GM12878 (cell line): ENCODE measurements at regions of chr14 and their contacts with region 1.

Region 1: GRCh38 chr14:102786768-102787167 is 9.5 kb downstream of the TRAF3 start:
- DNase-seq: no peak
- ATAC-seq: peak; percentile 67
- H3K4me3 ChIP-seq: peak overlapping the region; percentile 74; the same call in 1 of the 2 replicates
- H3K27ac ChIP-seq: peak overlapping the region; percentile 81
- H3K4me1 ChIP-seq: peaks cover 27% of the 10 kb centered on the region
- H3K27me3 ChIP-seq: no peaks in the 10 kb centered on the region
- CTCF ChIP-seq: no peak
- EP300 ChIP-seq: no peak
- POLR2A ChIP-seq: peak; percentile 40; the same call in 1 of the 2 replicates
- RAD21 ChIP-seq: no peak

Region 2: GRCh38 chr14:102171177-102172020 is 615.4 kb before region 1 on chr14:
- CTCF ChIA-PET with region 1: no interaction called
- POLR2A ChIA-PET with region 1: no interaction called
- RAD21 ChIA-PET with region 1: no interaction called
- SMC1A ChIA-PET with region 1: no interaction called
- in situ Hi-C with region 1: no loop called
- intact Hi-C with region 1: no loop called
- DNase-seq: no peak
- ATAC-seq: peak; percentile 42; the same call in 1 of the 3 replicates
- H3K4me3 ChIP-seq: no peak overlapping the region
- H3K27ac ChIP-seq: no peak overlapping the region
- H3K4me1 ChIP-seq: no peaks in the 10 kb centered on the region
- H3K27me3 ChIP-seq: no peaks in the 10 kb centered on the region
- CTCF ChIP-seq: no peak
- EP300 ChIP-seq: no peak
- POLR2A ChIP-seq: no peak
- RAD21 ChIP-seq: no peak

Region 3: GRCh38 chr14:102805371-102806246 is 18.8 kb after region 1 on chr14:
- CTCF ChIA-PET with region 1: interaction called, 32 read pairs
- POLR2A ChIA-PET with region 1: interaction called, 9 read pairs
- RAD21 ChIA-PET with region 1: interaction called, 14 read pairs
- SMC1A ChIA-PET with region 1: interaction called, 69 read pairs
- in situ Hi-C with region 1: no loop called
- intact Hi-C with region 1: no loop called
- DNase-seq: no peak
- ATAC-seq: peak; percentile 73
- H3K4me3 ChIP-seq: peak overlapping the region; percentile 43; the same call in 1 of the 2 replicates
- H3K27ac ChIP-seq: peak overlapping the region; percentile 78
- H3K4me1 ChIP-seq: peaks cover 77% of the 10 kb centered on the region
- H3K27me3 ChIP-seq: no peaks in the 10 kb centered on the region
- CTCF ChIP-seq: 0 out of 6 replicates have a peak, but pooled peaks of 2 of the 3 experiments have one; percentile 0 to 7
- EP300 ChIP-seq: no peak
- POLR2A ChIP-seq: peak; percentile 25; the same call in 1 of the 2 replicates
- RAD21 ChIP-seq: no peak

Region 4: DNA sequence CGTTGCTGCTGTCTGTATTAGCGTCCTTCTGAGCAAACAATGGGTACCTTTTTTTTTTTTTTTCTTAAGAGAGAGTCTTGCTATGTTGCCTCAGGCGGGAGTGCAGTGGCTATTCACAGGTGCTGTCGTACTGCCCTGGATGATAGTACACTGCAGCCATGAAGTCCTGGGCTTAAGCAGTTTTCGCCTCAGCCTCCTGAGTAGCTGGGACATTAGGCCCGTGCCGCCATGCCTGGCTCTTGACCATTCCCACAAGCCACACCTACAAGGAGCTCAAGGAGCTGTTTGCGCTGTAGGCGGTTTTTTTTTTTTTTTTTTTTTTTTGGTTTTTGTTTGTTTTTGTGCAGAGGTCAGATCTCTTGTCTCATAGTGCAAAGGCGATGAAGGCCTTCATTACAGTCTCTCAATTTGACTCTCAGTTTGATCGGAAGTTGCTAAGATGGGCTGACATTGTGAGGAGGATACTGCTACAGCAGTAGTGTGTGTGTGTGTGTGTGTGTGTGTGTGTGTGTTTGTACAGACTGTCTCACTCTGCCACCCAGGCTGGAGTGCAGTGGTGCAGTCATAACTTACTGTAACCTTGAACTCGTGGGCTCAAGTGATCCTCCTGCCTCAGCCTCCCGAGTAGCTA is 24.6 kb after region 1 on chr14:
- CTCF ChIA-PET with region 1: interaction called, 83 read pairs
- POLR2A ChIA-PET with region 1: interaction called, 9 read pairs
- RAD21 ChIA-PET with region 1: interaction called, 14 read pairs
- SMC1A ChIA-PET with region 1: interaction called, 99 read pairs
- in situ Hi-C with region 1: no loop called
- intact Hi-C with region 1: no loop called
- DNase-seq: no peak
- ATAC-seq: peak; percentile 4; the same call in 2 of the 3 replicates
- H3K4me3 ChIP-seq: no peak overlapping the region
- H3K27ac ChIP-seq: peak overlapping the region; percentile 48
- H3K4me1 ChIP-seq: peaks cover 74% of the 10 kb centered on the region
- H3K27me3 ChIP-seq: no peaks in the 10 kb centered on the region
- CTCF ChIP-seq: no peak
- EP300 ChIP-seq: no peak
- POLR2A ChIP-seq: no peak
- RAD21 ChIP-seq: no peak

Region 5: GRCh38 chr14:102819176-102819628 is 32.4 kb after region 1 on chr14:
- CTCF ChIA-PET with region 1: interaction called, 83 read pairs
- POLR2A ChIA-PET with region 1: interaction called, 23 read pairs
- RAD21 ChIA-PET with region 1: interaction called, 86 read pairs
- SMC1A ChIA-PET with region 1: interaction called, 99 read pairs
- in situ Hi-C with region 1: no loop called
- intact Hi-C with region 1: loop called (anchors 2 kb)
- DNase-seq: peak; percentile 89
- ATAC-seq: peak; percentile 90
- H3K4me3 ChIP-seq: peak overlapping the region; percentile 58
- H3K27ac ChIP-seq: peak overlapping the region; percentile 93
- H3K4me1 ChIP-seq: peaks cover 62% of the 10 kb centered on the region
- H3K27me3 ChIP-seq: no peaks in the 10 kb centered on the region
- CTCF ChIP-seq: no peak
- EP300 ChIP-seq: peak; percentile 92 to 94
- POLR2A ChIP-seq: peak; percentile 77
- RAD21 ChIP-seq: no peak

Region 6: DNA sequence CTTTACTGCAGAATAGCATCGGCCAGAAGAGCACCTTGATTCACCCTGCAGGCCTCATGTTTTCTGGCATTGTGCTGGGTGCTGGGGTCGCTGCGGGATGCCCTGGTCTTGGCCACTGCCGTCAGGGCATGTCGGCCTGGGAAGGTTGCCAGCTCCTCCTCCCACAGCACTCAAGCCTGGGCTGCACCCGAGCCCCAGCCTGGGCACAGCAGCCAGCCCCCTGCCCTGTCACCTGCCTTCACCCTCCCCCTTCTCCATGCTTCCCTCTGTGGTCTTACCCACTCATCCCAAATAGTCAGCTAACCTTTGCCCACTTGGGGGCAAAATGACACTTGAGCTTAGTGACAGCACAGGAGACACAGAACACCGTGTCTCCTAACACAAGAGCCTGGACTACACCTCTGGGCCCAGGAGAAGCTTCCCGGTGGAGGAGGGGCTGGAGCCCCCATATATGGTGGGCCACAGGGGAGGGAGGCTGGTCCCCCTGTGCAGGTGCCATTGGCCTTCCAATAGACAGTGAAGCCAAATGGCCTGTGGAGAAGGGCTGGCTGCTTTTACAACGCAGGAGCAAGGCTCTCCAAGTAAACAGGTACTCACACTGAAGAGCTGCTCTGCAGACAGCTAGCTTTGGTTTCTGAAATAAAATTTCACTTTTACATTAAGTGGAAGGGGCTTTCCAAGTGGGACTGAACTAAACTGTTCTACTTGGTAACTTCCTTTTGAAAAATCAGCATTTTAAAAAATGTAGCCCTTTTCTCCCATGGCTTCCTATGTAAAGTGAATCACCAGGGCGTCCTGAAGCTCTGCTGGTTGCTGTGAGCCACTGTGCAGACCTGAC is 84.4 kb after region 1 on chr14:
- CTCF ChIA-PET with region 1: interaction called, 3 read pairs
- POLR2A ChIA-PET with region 1: no interaction called
- RAD21 ChIA-PET with region 1: interaction called, 5 read pairs
- SMC1A ChIA-PET with region 1: interaction called, 12 read pairs
- in situ Hi-C with region 1: no loop called
- intact Hi-C with region 1: no loop called
- DNase-seq: no peak
- ATAC-seq: peak; percentile 59
- H3K4me3 ChIP-seq: no peak overlapping the region
- H3K27ac ChIP-seq: no peak overlapping the region; the same call in 1 of the 2 replicates
- H3K4me1 ChIP-seq: peaks cover 29% of the 10 kb centered on the region
- H3K27me3 ChIP-seq: no peaks in the 10 kb centered on the region
- CTCF ChIP-seq: no peak
- EP300 ChIP-seq: no peak
- POLR2A ChIP-seq: no peak
- RAD21 ChIP-seq: no peak

Region 7: GRCh38 chr14:102900631-102901571 is 114.1 kb after region 1 on chr14:
- CTCF ChIA-PET with region 1: interaction called, 17 read pairs
- POLR2A ChIA-PET with region 1: interaction called, 14 read pairs
- RAD21 ChIA-PET with region 1: interaction called, 25 read pairs
- SMC1A ChIA-PET with region 1: interaction called, 15 read pairs
- in situ Hi-C with region 1: no loop called
- intact Hi-C with region 1: no loop called
- DNase-seq: no peak
- ATAC-seq: peak; percentile 76
- H3K4me3 ChIP-seq: peak overlapping the region; percentile 43
- H3K27ac ChIP-seq: peak overlapping the region; percentile 98
- H3K4me1 ChIP-seq: peaks cover 59% of the 10 kb centered on the region
- H3K27me3 ChIP-seq: no peaks in the 10 kb centered on the region
- CTCF ChIP-seq: no peak
- EP300 ChIP-seq: no peak; a peak in 2 of 4 replicates
- POLR2A ChIP-seq: peak; percentile 61
- RAD21 ChIP-seq: no peak

Region 8: DNA sequence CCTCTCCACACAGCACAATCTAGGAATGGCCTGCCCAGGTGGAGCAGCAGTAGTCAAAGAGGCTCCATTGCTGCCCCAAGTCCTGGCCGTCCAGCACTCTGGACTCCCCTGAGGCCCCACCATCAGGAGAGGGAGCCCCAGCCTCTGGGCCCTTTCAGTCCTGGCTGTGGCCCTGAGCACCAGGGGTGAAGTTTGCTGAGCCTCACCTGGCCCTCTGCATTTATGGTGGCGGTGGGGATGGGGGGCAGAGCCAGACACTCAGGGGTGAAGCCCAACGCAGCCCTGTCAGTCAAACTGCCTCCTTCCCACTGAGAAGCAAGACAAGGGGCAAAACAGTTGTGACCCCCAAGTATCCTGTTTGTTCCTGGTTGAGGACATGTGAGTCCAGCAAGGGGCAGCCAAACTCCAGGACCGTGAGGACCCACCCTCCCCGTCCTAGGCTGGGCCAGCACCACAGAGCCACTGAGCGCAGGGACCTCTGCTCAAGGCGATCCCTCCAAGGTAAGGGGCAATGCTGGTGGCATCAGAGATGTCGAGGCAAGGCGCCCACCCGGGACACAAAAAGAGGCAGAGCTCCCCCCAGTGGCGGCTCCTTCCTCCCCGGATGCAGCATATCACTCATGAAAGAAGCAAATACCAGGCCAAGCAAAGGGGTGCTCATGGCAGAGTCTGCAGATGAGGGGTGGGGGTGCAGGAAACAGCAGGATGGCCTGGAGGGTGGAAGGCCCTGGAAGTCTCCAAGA is 130.9 kb after region 1 on chr14:
- CTCF ChIA-PET with region 1: interaction called, 10 read pairs
- POLR2A ChIA-PET with region 1: no interaction called
- RAD21 ChIA-PET with region 1: interaction called, 15 read pairs
- SMC1A ChIA-PET with region 1: interaction called, 5 read pairs
- in situ Hi-C with region 1: no loop called
- intact Hi-C with region 1: no loop called
- DNase-seq: no peak
- ATAC-seq: peak; percentile 68
- H3K4me3 ChIP-seq: no peak overlapping the region
- H3K27ac ChIP-seq: peak overlapping the region; percentile 17
- H3K4me1 ChIP-seq: peaks cover 22% of the 10 kb centered on the region
- H3K27me3 ChIP-seq: no peaks in the 10 kb centered on the region; a peak in 2 of 4 replicates
- CTCF ChIP-seq: peak; percentile 73 to 82 (median 75)
- EP300 ChIP-seq: no peak
- POLR2A ChIP-seq: peak; percentile 45
- RAD21 ChIP-seq: peak; percentile 84